ENCODE measurements at regions of chr2 and their contacts with region 1.

Region 1: GRCh38 chr2:216159144-216159543 is 50.0 kb downstream of the XRCC5 start:
- DNase-seq: no peak
- H3K4me3 ChIP-seq: no peak overlapping the region
- H3K27ac ChIP-seq: no peak overlapping the region
- H3K4me1 ChIP-seq: no peaks in the 10 kb centered on the region
- CTCF ChIP-seq: no peak

Region 2: GRCh38 chr2:215624423-215624829 is 534.7 kb before region 1 on chr2:
- CTCF ChIA-PET with region 1: no interaction called
- POLR2A ChIA-PET with region 1: no interaction called
- intact Hi-C with region 1: no loop called
- DNase-seq: no peak
- H3K4me3 ChIP-seq: no peak overlapping the region
- H3K27ac ChIP-seq: no peak overlapping the region
- H3K4me1 ChIP-seq: no peaks in the 10 kb centered on the region
- CTCF ChIP-seq: no peak

Region 3: DNA sequence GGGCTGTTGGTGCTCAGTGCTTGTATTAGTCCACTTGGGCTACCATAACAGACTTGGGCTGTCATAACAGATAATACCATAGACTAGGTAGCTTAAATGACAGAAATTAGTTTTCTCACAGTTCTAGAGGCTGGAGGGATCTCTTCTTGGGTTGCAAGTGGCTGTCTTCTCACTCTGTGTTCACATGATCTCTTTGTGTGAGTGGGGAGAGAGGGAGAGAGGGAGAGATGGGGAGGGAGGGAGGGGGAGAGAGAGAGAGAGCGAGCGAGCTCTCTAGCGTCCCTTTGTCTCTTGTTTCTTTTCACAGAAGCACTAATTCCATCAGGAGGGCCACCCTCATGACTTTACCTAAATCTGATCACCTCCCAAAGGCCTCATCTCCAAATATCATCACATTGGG is 54.5 kb before region 1 on chr2:
- CTCF ChIA-PET with region 1: no interaction called
- POLR2A ChIA-PET with region 1: no interaction called
- intact Hi-C with region 1: no loop called
- DNase-seq: no peak
- H3K4me3 ChIP-seq: no peak overlapping the region
- H3K27ac ChIP-seq: no peak overlapping the region
- H3K4me1 ChIP-seq: peaks cover 8% of the 10 kb centered on the region
- CTCF ChIP-seq: no peak

Region 4: DNA sequence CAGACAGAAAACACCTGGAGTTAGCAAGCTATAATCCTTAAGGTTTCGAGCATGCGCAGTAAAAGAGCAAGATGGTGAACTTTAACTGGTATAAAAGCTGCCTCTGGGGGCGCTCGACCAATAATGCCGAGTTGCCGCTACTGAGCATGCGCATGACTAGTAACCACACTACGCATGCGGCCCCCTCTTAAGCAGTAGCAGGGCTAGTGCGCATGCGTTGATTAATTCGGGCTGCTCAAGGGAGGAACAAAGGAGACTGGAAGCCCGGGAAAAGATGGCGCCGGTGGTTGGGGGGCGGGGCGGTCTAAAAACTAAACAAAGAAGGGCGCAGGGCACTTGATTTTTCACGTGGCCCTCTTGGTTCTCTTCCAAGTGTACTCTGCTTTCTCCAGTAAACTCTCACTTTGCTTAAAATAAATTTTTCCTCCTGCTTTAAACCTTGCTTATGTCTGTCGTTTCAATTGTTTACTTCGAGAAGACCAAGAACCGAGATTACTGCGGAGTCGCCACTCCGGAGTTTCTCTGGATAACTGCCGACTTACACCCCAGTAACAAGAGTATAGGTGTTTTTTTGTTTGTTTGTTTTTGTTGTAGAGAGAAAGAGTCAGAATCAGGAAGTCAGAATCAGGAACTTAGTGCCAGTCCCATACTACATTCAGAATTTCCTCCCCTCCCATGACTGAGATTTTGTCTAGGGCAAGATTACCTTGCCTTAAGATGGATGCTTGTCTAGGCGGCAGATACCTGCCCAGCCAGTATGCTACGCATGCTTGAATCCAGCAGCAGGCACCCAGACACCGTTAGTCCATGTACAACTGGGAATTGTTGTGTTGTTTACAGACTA is 44.2 kb before region 1 on chr2:
- CTCF ChIA-PET with region 1: no interaction called
- POLR2A ChIA-PET with region 1: no interaction called
- intact Hi-C with region 1: loop called (anchors 5 kb)
- DNase-seq: peak; percentile 98
- H3K4me3 ChIP-seq: peak overlapping the region; percentile 58
- H3K27ac ChIP-seq: peak overlapping the region; percentile 39
- H3K4me1 ChIP-seq: peaks cover 57% of the 10 kb centered on the region
- CTCF ChIP-seq: peak; percentile 91

Region 5: GRCh38 chr2:216486708-216487107 is 327.6 kb after region 1 on chr2:
- CTCF ChIA-PET with region 1: no interaction called
- POLR2A ChIA-PET with region 1: no interaction called
- intact Hi-C with region 1: no loop called
- DNase-seq: no peak
- H3K4me3 ChIP-seq: no peak overlapping the region
- H3K27ac ChIP-seq: no peak overlapping the region
- H3K4me1 ChIP-seq: peaks cover 3% of the 10 kb centered on the region
- CTCF ChIP-seq: no peak

Measured in OCI-LY7 (cell line).